Activated B cell treated with CpG ODN at 0.5 μM for 24 hours (primary cell): ENCODE measurements at regions of chr14 and their contacts with region 1.

Region 1: DNA sequence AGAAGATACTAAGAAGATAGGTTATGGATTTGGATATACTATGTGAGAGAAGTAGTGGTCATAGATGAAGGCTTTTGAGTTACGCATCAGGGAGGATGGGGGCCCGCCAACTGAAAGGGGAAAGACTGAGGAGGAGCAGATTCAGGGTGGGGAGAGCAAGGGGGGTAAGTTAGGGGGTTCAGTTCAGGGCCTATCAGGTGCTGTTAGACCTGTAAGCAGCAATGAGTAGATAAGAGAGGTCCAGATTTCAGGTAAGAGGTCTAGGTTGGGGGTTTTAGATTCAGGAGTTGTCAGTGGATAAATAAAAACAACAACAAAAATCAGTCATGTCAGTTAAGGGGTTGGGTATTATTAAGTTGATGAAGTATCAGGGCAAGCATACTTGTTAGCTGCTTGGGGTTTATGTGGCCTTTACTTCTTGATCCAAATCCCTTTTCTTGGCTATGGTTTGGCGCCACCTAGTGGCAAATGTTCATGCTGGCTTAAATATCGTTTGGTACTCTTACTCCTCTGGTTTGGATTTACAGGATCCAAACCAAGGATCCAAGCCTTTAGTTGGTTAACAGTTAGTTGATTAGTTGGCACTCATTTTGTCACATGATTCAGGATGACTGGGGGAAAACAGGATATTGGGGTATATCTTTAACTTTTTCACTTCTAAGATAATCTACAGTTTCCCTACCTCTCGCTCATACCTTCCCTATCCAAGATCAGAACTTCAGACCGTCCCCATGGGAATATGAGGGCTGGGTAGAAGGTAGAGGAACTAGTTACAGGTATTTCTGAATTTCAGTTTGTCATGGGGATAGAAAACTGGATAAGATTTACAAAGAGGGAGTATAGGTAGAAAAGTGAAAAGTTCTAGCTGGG is 65.1 kb downstream of the PCNX1 start:
- DNase-seq: peak; percentile 49
- ATAC-seq: peak; percentile 62
- H3K4me3 Mint-ChIP-seq: no peak overlapping the region
- H3K27ac Mint-ChIP-seq: no peak overlapping the region
- H3K4me1 Mint-ChIP-seq: peaks cover 5% of the 10 kb centered on the region
- H3K27me3 Mint-ChIP-seq: no peaks in the 10 kb centered on the region
- CTCF ChIP-seq: peak; percentile 59

Region 2: GRCh38 chr14:70622111-70622712 is 350.1 kb before region 1 on chr14:
- CTCF ChIA-PET with region 1: interaction called, 3 read pairs
- POLR2A ChIA-PET with region 1: no interaction called
- intact Hi-C with region 1: loop called (anchors 1 kb)
- DNase-seq: no peak
- ATAC-seq: peak; percentile 95
- H3K4me3 Mint-ChIP-seq: no peak overlapping the region
- H3K27ac Mint-ChIP-seq: no peak overlapping the region
- H3K4me1 Mint-ChIP-seq: peaks cover 19% of the 10 kb centered on the region
- H3K27me3 Mint-ChIP-seq: no peaks in the 10 kb centered on the region
- CTCF ChIP-seq: peak; percentile 74

Region 3: GRCh38 chr14:70873627-70874026 is 98.7 kb before region 1 on chr14:
- CTCF ChIA-PET with region 1: interaction called, 5 read pairs
- POLR2A ChIA-PET with region 1: no interaction called
- intact Hi-C with region 1: loop called (anchors 1 kb)
- DNase-seq: no peak
- ATAC-seq: no peak
- H3K4me3 Mint-ChIP-seq: no peak overlapping the region
- H3K27ac Mint-ChIP-seq: no peak overlapping the region
- H3K4me1 Mint-ChIP-seq: peaks cover 6% of the 10 kb centered on the region
- H3K27me3 Mint-ChIP-seq: no peaks in the 10 kb centered on the region
- CTCF ChIP-seq: no peak

Region 4: GRCh38 chr14:70919774-70920173 is 52.6 kb before region 1 on chr14:
- CTCF ChIA-PET with region 1: no interaction called
- POLR2A ChIA-PET with region 1: no interaction called
- intact Hi-C with region 1: no loop called
- DNase-seq: no peak
- ATAC-seq: no peak
- H3K4me3 Mint-ChIP-seq: peak overlapping the region; percentile 35
- H3K27ac Mint-ChIP-seq: no peak overlapping the region
- H3K4me1 Mint-ChIP-seq: peaks cover 73% of the 10 kb centered on the region
- H3K27me3 Mint-ChIP-seq: no peaks in the 10 kb centered on the region
- CTCF ChIP-seq: no peak